GM23248 (cell line): ENCODE measurements at regions of chr5 and their contacts with region 1.

Region 1: GRCh38 chr5:15463231-15463980 is 36.6 kb upstream of the FBXL7 start:
- DNase-seq: peak; percentile 54
- H3K4me3 ChIP-seq: no peak overlapping the region
- H3K27ac ChIP-seq: no peak overlapping the region
- H3K4me1 ChIP-seq: no peaks in the 10 kb centered on the region
- H3K27me3 ChIP-seq: peaks cover 69% of the 10 kb centered on the region

Region 2: GRCh38 chr5:14977058-14977685 is 486.2 kb before region 1 on chr5:
- in situ Hi-C with region 1: no loop called
- DNase-seq: no peak
- H3K4me3 ChIP-seq: no peak overlapping the region
- H3K27ac ChIP-seq: no peak overlapping the region
- H3K4me1 ChIP-seq: no peaks in the 10 kb centered on the region
- H3K27me3 ChIP-seq: no peaks in the 10 kb centered on the region

Region 3: DNA sequence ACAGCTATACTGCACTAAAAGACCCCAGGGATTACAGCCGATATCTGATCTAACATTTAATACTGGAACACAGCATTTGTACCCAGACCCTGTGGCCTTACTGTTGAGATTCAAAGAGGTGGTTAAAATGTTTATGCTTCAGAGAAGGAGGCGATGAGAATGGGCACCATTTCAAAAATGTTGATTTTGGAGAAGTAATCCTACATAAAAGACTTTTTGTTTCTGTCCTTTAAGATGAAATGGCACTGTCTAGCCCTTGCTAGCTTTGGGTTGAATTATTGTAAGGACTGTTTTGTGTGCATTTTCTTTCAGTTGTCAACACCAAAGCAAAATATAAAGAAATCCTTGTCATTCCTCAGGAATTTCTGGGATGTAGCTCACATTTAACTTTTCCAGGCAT is 303.3 kb before region 1 on chr5:
- in situ Hi-C with region 1: no loop called
- DNase-seq: no peak
- H3K4me3 ChIP-seq: no peak overlapping the region
- H3K27ac ChIP-seq: no peak overlapping the region
- H3K4me1 ChIP-seq: no peaks in the 10 kb centered on the region
- H3K27me3 ChIP-seq: peaks cover 12% of the 10 kb centered on the region; the same call in 1 of the 2 replicates

Region 4: GRCh38 chr5:15995341-15996052 is 532.1 kb after region 1 on chr5:
- in situ Hi-C with region 1: loop called (anchors 25 kb)
- DNase-seq: peak; percentile 52
- H3K4me3 ChIP-seq: no peak overlapping the region
- H3K27ac ChIP-seq: no peak overlapping the region
- H3K4me1 ChIP-seq: peaks cover 11% of the 10 kb centered on the region
- H3K27me3 ChIP-seq: peaks cover 32% of the 10 kb centered on the region